ENCODE measurements at regions of chr20 and their contacts with region 1.

Region 1: DNA sequence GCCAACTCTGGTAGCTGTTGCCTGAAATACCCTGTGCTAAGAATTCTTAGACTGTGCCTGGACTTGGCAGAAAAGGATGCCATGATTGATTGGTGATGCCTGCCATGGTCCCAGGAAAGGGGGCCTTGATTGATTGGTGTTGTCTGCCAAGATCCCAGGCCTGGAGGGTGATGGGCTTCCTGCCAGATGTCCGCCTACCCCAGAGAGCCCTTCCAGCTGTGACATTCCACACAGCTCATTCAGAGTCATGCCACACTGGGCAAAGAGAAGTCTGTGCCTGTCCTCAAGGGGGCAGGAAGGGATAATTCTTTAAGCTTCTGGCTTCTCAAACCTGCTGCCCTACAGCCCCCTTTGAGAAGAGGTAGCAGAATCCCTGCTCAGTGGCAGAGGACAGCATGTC is 24.6 kb downstream of the RIMS4 start:
- DNase-seq: peak; percentile 84
- H3K4me3 ChIP-seq: no peak overlapping the region
- H3K27ac ChIP-seq: peak overlapping the region in 1 of 2 experiments; percentile 47; a peak in 2 of 4 replicates
- H3K4me1 ChIP-seq: peaks cover 0 to 12% of the 10 kb centered on the region in 2 experiments; a peak in 1 of 4 replicates
- H3K27me3 ChIP-seq: no peaks in the 10 kb centered on the region
- CTCF ChIP-seq: peak; percentile 21; the same call in 1 of the 2 replicates
- EP300 ChIP-seq: peak in 1 of 2 experiments; percentile 68; a peak in 1 of 4 replicates
- RAD21 ChIP-seq: peak; percentile 85

Region 2: GRCh38 chr20:44747166-44748004 is 38.4 kb before region 1 on chr20:
- CTCF ChIA-PET with region 1: interaction called, 62 read pairs
- POLR2A ChIA-PET with region 1: interaction called, 5 read pairs
- DNase-seq: peak; percentile 86
- H3K4me3 ChIP-seq: peak overlapping the region in 1 of 2 experiments; percentile 29; a peak in 1 of 4 replicates
- H3K27ac ChIP-seq: peak overlapping the region in 1 of 2 experiments; percentile 82; a peak in 2 of 4 replicates
- H3K4me1 ChIP-seq: peaks cover 6 to 37% of the 10 kb centered on the region in 2 experiments; a peak in 3 of 4 replicates
- H3K27me3 ChIP-seq: peaks cover 11% of the 10 kb centered on the region
- CTCF ChIP-seq: peak; percentile 78
- EP300 ChIP-seq: no peak
- RAD21 ChIP-seq: peak; percentile 75

Region 3: GRCh38 chr20:44800398-44801046 is 14.8 kb after region 1 on chr20:
- CTCF ChIA-PET with region 1: interaction called, 22 read pairs
- POLR2A ChIA-PET with region 1: interaction called, 3 read pairs
- DNase-seq: peak; percentile 36
- H3K4me3 ChIP-seq: no peak overlapping the region
- H3K27ac ChIP-seq: no peak overlapping the region; a peak in 1 of 4 replicates
- H3K4me1 ChIP-seq: peaks cover 0 to 47% of the 10 kb centered on the region in 2 experiments; a peak in 2 of 4 replicates
- H3K27me3 ChIP-seq: no peaks in the 10 kb centered on the region; the same call in 1 of the 2 replicates
- CTCF ChIP-seq: peak; percentile 46
- EP300 ChIP-seq: no peak
- RAD21 ChIP-seq: peak; percentile 46

Region 4: DNA sequence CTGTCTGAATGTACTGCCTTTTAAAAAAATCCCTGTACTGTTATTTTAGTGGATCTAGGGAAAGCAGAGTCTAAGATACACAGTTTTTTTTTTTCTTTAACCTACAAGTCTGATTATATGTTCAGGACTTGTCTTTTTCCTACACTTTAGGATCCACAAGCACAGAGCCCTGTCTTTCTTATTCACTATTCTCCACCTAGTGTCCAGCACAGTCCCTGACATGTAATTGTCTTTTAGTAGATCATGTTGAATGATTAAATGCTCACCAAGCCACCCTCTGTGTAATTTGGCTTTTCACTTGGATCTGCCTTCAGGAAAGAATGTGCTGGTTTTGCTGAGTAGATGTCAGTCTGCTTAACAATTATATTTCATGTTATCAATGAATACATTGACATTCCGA is 63.9 kb after region 1 on chr20:
- CTCF ChIA-PET with region 1: interaction called, 13 read pairs
- POLR2A ChIA-PET with region 1: no interaction called
- DNase-seq: peak; percentile 30
- H3K4me3 ChIP-seq: no peak overlapping the region
- H3K27ac ChIP-seq: no peak overlapping the region
- H3K4me1 ChIP-seq: no peaks in the 10 kb centered on the region
- H3K27me3 ChIP-seq: no peaks in the 10 kb centered on the region; the same call in 1 of the 2 replicates
- CTCF ChIP-seq: no peak
- EP300 ChIP-seq: no peak
- RAD21 ChIP-seq: peak; percentile 40

Region 5: DNA sequence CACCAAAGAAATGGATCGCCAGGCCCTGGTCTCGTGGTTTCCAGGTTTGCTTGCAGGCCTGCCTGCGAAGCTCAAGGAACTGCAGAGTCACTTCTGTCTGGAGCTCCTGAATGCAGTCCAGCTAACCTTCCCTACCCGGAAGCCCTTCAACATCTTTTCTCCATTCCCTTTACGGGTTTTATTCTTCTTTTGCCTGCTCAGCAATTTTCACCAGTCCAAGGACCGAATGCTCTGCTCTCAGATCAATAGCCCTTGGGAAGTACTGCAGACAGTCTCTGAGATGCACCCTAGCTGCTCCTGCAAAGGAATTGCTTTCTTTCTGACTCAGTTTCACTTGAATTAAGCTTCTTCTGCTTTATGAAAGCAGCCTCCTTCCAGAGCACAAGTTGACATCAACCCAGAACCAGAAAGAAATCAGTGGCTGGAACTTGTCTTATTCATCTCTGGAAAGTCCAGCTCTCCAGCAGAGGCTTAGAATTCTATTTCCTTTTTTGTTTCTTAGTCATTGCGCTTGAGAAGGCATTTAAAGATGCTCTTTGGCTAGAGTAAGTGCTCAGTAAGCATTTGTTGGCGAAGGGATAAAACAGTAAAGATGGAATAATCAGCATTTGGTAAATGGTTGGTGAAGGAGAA is 81.0 kb after region 1 on chr20:
- CTCF ChIA-PET with region 1: interaction called, 64 read pairs
- POLR2A ChIA-PET with region 1: interaction called, 4 read pairs
- DNase-seq: no peak
- H3K4me3 ChIP-seq: no peak overlapping the region
- H3K27ac ChIP-seq: no peak overlapping the region
- H3K4me1 ChIP-seq: peaks cover 0 to 8% of the 10 kb centered on the region in 2 experiments; a peak in 1 of 4 replicates
- H3K27me3 ChIP-seq: no peaks in the 10 kb centered on the region
- CTCF ChIP-seq: no peak
- EP300 ChIP-seq: no peak
- RAD21 ChIP-seq: no peak

Measured in SK-N-SH (cell line).